Naive thymus-derived CD4-positive, alpha-beta T cell (primary cell): ENCODE measurements at regions of chr13 and their contacts with region 1.

Region 1: DNA sequence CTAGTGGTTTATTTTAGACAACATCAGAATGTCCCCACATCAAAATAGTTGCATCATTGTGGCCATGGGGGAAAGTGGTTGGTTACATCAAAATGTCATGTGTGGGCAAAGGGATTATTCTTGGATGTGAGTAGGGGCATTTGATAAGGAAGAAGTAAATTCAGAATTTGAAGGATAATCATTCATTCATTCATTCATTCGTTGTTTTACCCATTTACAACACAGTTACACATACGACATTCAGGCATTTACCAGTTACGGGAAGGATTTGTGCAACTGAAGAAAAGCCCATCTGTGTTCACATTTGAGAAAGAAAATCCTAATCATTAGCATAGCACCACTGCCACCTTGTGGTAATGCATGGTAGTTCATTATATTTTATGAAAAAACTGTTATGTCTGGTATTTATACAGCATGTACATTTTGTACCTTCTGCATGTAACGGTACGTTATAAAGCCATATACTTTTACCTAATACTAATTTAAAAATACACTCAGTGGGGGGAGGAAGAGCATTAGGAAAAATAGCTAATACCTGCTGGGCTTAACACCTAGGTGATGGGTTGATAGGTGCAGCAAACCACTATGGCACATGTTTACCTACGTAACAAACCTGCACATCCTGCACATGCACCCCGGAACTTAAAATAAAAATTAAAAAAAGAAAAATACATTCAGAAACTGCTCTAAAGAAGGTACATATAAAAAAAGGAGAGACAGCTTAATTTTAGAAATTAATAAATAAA is 62.1 kb downstream of the DGKH start:
- DNase-seq: peak in 7 of 9 donors; percentile 30 to 78 (median 65)
- ATAC-seq: peak; percentile 90
- H3K4me3 ChIP-seq: no peak overlapping the region
- H3K4me3 Mint-ChIP-seq: no peak overlapping the region
- H3K27ac ChIP-seq: no peak overlapping the region
- H3K27ac Mint-ChIP-seq: no peak overlapping the region
- H3K4me1 ChIP-seq: no peaks in the 10 kb centered on the region
- H3K4me1 Mint-ChIP-seq: peaks cover 4 to 9% (median 7%) of the 10 kb centered on the region in 7 donors
- H3K27me3 ChIP-seq: no peaks in the 10 kb centered on the region
- H3K27me3 Mint-ChIP-seq: no peaks in the 10 kb centered on the region

Region 2: GRCh38 chr13:41075034-41075433 is 1035.5 kb before region 1 on chr13:
- CTCF ChIA-PET with region 1: no interaction called
- POLR2A ChIA-PET with region 1: no interaction called
- intact Hi-C with region 1: loop called in 1 of 2 experiments (anchors 1 kb)
- DNase-seq: peak in 7 of 9 donors; percentile 15 to 58 (median 51)
- ATAC-seq: peak; percentile 63
- H3K4me3 ChIP-seq: no peak overlapping the region
- H3K4me3 Mint-ChIP-seq: no peak overlapping the region
- H3K27ac ChIP-seq: no peak overlapping the region
- H3K27ac Mint-ChIP-seq: no peak overlapping the region
- H3K4me1 ChIP-seq: no peaks in the 10 kb centered on the region
- H3K4me1 Mint-ChIP-seq: no peaks in the 10 kb centered on the region
- H3K27me3 ChIP-seq: no peaks in the 10 kb centered on the region
- H3K27me3 Mint-ChIP-seq: no peaks in the 10 kb centered on the region

Region 3: GRCh38 chr13:41411522-41411921 is 699.1 kb before region 1 on chr13:
- CTCF ChIA-PET with region 1: interaction called, 3 read pairs
- POLR2A ChIA-PET with region 1: no interaction called
- intact Hi-C with region 1: loop called in 1 of 2 experiments (anchors 1 kb)
- DNase-seq: peak in 6 of 9 donors; percentile 17 to 54 (median 28)
- ATAC-seq: peak; percentile 48
- H3K4me3 ChIP-seq: no peak overlapping the region
- H3K4me3 Mint-ChIP-seq: no peak overlapping the region
- H3K27ac ChIP-seq: no peak overlapping the region
- H3K27ac Mint-ChIP-seq: peak overlapping the region in 2 of 9 donors; percentile 36 to 66
- H3K4me1 ChIP-seq: no peaks in the 10 kb centered on the region
- H3K4me1 Mint-ChIP-seq: peaks cover 0 to 4% (median 0%) of the 10 kb centered on the region in 7 donors
- H3K27me3 ChIP-seq: no peaks in the 10 kb centered on the region
- H3K27me3 Mint-ChIP-seq: peaks cover 0 to 13% (median 0%) of the 10 kb centered on the region in 5 donors

Region 4: GRCh38 chr13:41668130-41668757 is 442.3 kb before region 1 on chr13:
- CTCF ChIA-PET with region 1: interaction called, 44 read pairs
- POLR2A ChIA-PET with region 1: interaction called, 4 read pairs
- intact Hi-C with region 1: loop called (anchors 1 kb)
- DNase-seq: peak in 6 of 9 donors; percentile 21 to 61 (median 45)
- ATAC-seq: peak; percentile 91
- H3K4me3 ChIP-seq: no peak overlapping the region
- H3K4me3 Mint-ChIP-seq: no peak overlapping the region
- H3K27ac ChIP-seq: no peak overlapping the region
- H3K27ac Mint-ChIP-seq: peak overlapping the region in 2 of 9 donors; percentile 0 to 9
- H3K4me1 ChIP-seq: no peaks in the 10 kb centered on the region
- H3K4me1 Mint-ChIP-seq: peaks cover 0 to 4% (median 0%) of the 10 kb centered on the region in 7 donors
- H3K27me3 ChIP-seq: no peaks in the 10 kb centered on the region
- H3K27me3 Mint-ChIP-seq: no peaks in the 10 kb centered on the region

Region 5: GRCh38 chr13:41811588-41812021 is 299.0 kb before region 1 on chr13:
- CTCF ChIA-PET with region 1: no interaction called
- POLR2A ChIA-PET with region 1: no interaction called
- intact Hi-C with region 1: no loop called
- DNase-seq: no peak
- ATAC-seq: peak; percentile 77
- H3K4me3 ChIP-seq: no peak overlapping the region
- H3K4me3 Mint-ChIP-seq: peak overlapping the region in 1 of 10 donors; percentile 21
- H3K27ac ChIP-seq: no peak overlapping the region
- H3K27ac Mint-ChIP-seq: no peak overlapping the region
- H3K4me1 ChIP-seq: peaks cover 0 to 16% of the 10 kb centered on the region in 2 donors
- H3K4me1 Mint-ChIP-seq: peaks cover 0 to 20% (median 12%) of the 10 kb centered on the region in 7 donors
- H3K27me3 ChIP-seq: no peaks in the 10 kb centered on the region
- H3K27me3 Mint-ChIP-seq: no peaks in the 10 kb centered on the region

Region 6: GRCh38 chr13:42039946-42040729 is 70.4 kb before region 1 on chr13:
- CTCF ChIA-PET with region 1: no interaction called
- POLR2A ChIA-PET with region 1: no interaction called
- intact Hi-C with region 1: loop called in 1 of 2 experiments (anchors 1 kb)
- DNase-seq: peak; percentile 67 to 87 (median 79)
- ATAC-seq: peak; percentile 92
- H3K4me3 ChIP-seq: peak overlapping the region; percentile 70
- H3K4me3 Mint-ChIP-seq: peak overlapping the region; percentile 83 to 95 (median 90)
- H3K27ac ChIP-seq: peak overlapping the region; percentile 73
- H3K27ac Mint-ChIP-seq: peak overlapping the region; percentile 29 to 91 (median 84)
- H3K4me1 ChIP-seq: peaks cover 7 to 8% of the 10 kb centered on the region in 2 donors
- H3K4me1 Mint-ChIP-seq: peaks cover 7 to 22% (median 20%) of the 10 kb centered on the region in 7 donors
- H3K27me3 ChIP-seq: no peaks in the 10 kb centered on the region
- H3K27me3 Mint-ChIP-seq: peaks cover 0 to 58% (median 0%) of the 10 kb centered on the region in 5 donors

Region 7: GRCh38 chr13:42215578-42216421 is 105.2 kb after region 1 on chr13:
- CTCF ChIA-PET with region 1: no interaction called
- POLR2A ChIA-PET with region 1: no interaction called
- intact Hi-C with region 1: loop called in 1 of 2 experiments (anchors 2 kb)
- DNase-seq: peak in 5 of 9 donors; percentile 3 to 20 (median 5)
- ATAC-seq: peak; percentile 42
- H3K4me3 ChIP-seq: no peak overlapping the region
- H3K4me3 Mint-ChIP-seq: no peak overlapping the region
- H3K27ac ChIP-seq: no peak overlapping the region
- H3K27ac Mint-ChIP-seq: peak overlapping the region in 1 of 9 donors; percentile 36
- H3K4me1 ChIP-seq: no peaks in the 10 kb centered on the region
- H3K4me1 Mint-ChIP-seq: no peaks in the 10 kb centered on the region
- H3K27me3 ChIP-seq: no peaks in the 10 kb centered on the region
- H3K27me3 Mint-ChIP-seq: no peaks in the 10 kb centered on the region